ENCODE measurements at regions of chr15 and their contacts with region 1.

Region 1: GRCh38 chr15:29269485-29270168 is at the start of gene NSMCE3:
- DNase-seq: peak; percentile 87 to 99 (median 91)

Region 2: DNA sequence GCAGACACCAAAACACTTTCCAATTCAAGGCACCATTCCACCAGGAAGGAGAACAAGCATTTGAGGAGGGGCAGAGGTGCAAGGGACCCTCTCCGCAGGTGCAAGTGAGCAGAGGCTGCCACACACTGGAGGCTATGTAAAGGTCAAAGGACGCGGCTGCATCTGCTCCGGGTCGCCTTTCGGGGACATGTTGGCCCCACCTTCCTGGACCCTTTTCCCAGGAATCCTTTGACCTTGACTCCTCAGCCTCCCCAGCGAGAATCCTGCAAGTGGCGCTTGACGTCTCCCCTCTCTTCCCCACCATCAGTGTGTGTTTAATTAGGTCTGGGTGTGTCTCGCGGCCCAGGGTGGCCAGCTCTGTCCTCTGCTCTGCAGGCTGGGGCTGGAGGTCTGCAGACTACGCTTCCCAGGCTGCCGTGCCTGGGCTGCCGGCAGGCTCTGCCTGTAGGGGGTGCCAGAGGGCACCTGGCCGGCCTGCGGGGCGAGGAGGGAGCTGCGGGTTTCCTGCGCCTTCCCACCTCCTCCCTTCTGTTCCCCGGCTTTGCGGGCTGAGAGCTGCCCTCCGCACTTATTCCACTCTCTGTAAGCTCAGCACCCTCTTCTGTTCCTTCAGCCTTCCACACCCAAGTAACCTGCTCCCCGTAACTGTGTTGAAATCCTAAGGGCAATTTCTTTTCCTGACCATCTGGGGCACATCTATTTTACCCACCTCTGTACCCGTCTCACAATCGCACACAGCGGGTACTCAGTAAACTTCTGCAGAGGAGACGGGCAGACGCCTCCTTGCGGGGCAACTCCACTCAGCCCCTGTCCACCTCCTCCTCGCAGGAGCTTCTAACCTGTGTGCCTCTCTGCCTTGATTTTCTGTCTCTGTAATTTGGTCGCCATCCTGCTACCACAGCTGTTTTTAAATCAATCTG is 129.8 kb before region 1 on chr15:
- intact Hi-C with region 1: loop called (anchors 10 kb)
- DNase-seq: peak in 8 of 10 donors; percentile 44 to 94 (median 66)

Region 3: DNA sequence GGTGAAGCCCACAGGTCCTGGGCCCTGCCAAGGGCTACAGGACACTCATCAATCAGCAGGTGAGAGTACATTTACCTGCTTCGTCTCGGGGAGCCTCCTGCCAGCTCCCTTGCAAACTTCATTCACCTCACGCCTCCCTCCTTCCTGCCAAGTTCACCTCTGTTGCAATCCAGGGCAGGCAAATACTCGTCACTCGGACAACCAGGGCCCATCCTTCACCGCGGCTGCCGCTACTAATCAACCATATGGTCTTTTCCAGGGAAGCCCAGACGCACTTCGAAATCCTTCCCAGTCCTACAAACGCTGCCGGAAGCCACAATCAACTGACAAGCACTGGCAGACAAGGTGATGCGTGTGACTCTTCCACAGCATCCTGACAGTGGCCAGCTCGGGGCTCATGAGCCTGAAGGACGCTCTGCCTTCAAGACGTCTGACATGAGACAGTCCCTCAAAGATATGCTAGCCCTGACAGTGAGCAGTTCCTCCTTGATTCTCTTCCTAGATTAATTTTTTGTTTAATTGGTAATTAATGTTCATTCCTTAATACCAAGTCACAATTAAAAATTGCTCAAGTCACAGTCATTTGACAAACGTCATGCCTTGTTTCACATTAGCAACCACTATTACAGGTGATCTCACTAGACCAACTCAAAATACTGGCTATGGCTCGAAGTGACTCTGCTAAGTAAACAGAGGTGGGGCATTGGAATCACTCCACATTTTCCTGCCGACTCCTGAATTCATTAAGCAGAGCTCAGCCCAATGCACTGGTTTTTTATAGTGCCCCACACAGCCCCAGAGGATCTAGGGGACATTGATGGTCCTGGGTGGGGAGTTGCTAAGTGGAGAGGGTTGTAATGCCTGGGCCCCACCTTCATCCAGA is 200.9 kb after region 1 on chr15:
- intact Hi-C with region 1: no loop called
- DNase-seq: peak in 1 of 10 donors; percentile 84